ENCODE measurements at regions of chr2 and their contacts with region 1.

Region 1: GRCh38 chr2:200929334-200930249 is 33.9 kb downstream of the ORC2 start:
- DNase-seq: peak; percentile 14
- ATAC-seq: peak; percentile 96
- H3K4me3 Mint-ChIP-seq: no peak overlapping the region
- H3K27ac Mint-ChIP-seq: peak overlapping the region; percentile 72
- H3K4me1 Mint-ChIP-seq: peaks cover 20% of the 10 kb centered on the region
- H3K27me3 Mint-ChIP-seq: no peaks in the 10 kb centered on the region

Region 2: GRCh38 chr2:199458009-199458805 is 1471.4 kb before region 1 on chr2:
- CTCF ChIA-PET with region 1: no interaction called
- POLR2A ChIA-PET with region 1: no interaction called
- intact Hi-C with region 1: no loop called
- DNase-seq: peak; percentile 59
- ATAC-seq: peak; percentile 52
- H3K4me3 Mint-ChIP-seq: peak overlapping the region; percentile 82
- H3K27ac Mint-ChIP-seq: no peak overlapping the region
- H3K4me1 Mint-ChIP-seq: peaks cover 21% of the 10 kb centered on the region
- H3K27me3 Mint-ChIP-seq: peaks cover 39% of the 10 kb centered on the region

Region 3: DNA sequence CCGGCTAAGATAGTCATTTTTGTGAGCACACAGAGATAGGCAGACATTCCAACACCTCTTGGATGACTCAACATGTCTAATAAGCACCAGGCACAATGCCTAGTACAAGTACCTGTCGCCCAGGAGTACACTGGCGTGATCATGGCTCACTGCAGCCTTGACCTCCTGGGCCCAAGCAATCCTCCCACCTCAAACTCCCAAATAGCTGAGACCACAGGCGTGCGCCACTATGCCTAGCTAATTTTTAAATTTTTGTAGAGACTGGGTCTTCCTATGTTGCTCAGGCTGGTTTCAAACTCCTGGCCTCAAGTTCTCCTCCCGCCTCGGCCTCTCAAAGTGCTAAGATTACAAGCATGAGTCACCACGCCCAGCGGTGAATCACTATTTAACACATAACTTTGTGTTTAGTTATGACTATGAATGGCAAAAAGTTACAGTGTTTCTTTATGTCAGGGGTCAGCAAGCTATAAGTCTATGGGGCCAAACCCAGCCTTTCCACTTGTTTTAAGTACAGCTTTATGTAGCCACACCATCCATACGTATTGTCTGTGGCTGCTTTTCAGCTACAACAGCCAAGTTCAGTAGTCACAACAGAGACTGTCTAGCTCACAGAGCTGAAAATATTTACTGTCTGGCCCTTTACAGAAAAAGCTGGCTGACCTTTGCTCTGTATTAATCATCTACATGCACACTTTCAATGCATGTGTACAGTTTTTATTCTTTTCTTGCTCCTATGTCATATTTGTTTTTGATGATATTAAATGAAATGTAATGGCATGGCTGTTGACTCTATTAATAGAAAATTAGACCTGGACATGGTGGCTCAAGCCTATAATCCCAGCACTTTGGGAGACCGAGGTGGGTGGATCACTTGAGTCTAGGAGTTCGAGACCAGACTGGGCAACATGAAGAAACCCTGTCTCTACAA is 15.1 kb after region 1 on chr2:
- CTCF ChIA-PET with region 1: no interaction called
- POLR2A ChIA-PET with region 1: interaction called, 3 read pairs
- intact Hi-C with region 1: loop called in 1 of 2 experiments (anchors 2 kb)
- DNase-seq: peak; percentile 89
- ATAC-seq: peak; percentile 88
- H3K4me3 Mint-ChIP-seq: peak overlapping the region; percentile 18
- H3K27ac Mint-ChIP-seq: peak overlapping the region; percentile 49
- H3K4me1 Mint-ChIP-seq: peaks cover 27% of the 10 kb centered on the region
- H3K27me3 Mint-ChIP-seq: no peaks in the 10 kb centered on the region

Region 4: DNA sequence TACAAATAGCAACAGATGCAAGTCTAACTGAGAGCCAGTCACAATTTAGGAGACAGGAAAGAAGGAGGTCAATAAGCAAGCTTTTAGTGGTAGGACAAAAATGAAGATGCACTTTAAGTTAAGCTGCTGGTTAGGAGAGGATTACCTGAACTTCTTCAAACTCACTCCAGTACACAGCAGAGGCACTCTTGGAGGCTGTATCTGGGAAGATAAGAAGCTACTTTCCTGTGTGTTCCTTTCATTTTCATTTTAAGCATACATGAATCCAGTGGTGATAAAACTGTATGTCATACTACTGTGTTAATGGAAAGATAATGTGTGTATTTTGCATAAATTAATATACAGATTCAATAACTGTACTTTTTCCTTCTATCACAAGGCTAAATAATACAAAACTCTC is 92.3 kb after region 1 on chr2:
- CTCF ChIA-PET with region 1: no interaction called
- POLR2A ChIA-PET with region 1: no interaction called
- intact Hi-C with region 1: no loop called
- DNase-seq: no peak
- ATAC-seq: peak; percentile 60
- H3K4me3 Mint-ChIP-seq: no peak overlapping the region
- H3K27ac Mint-ChIP-seq: no peak overlapping the region
- H3K4me1 Mint-ChIP-seq: peaks cover 18% of the 10 kb centered on the region
- H3K27me3 Mint-ChIP-seq: no peaks in the 10 kb centered on the region